Endothelial cell of umbilical vein (primary cell): ENCODE measurements at regions of chr17 and their contacts with region 1.

Region 1: GRCh38 chr17:50865984-50866774 is at the start of gene TOB1:
- DNase-seq: peak; percentile 98
- H3K4me3 ChIP-seq: peak within 1 kb of the TSS; percentile 48 to 82 (median 63)
- H3K27ac ChIP-seq: peak within 1 kb of the TSS; percentile 38
- H3K4me1 ChIP-seq: peaks cover 11% of the 10 kb centered on the region
- H3K27me3 ChIP-seq: no peaks in the 10 kb centered on the region
- CTCF ChIP-seq: no peak
- POLR2A ChIP-seq: peak; percentile 99
- total RNA-seq, gene TOB1: 12.9 and 13.0 TPM in 2 replicates

Region 2: DNA sequence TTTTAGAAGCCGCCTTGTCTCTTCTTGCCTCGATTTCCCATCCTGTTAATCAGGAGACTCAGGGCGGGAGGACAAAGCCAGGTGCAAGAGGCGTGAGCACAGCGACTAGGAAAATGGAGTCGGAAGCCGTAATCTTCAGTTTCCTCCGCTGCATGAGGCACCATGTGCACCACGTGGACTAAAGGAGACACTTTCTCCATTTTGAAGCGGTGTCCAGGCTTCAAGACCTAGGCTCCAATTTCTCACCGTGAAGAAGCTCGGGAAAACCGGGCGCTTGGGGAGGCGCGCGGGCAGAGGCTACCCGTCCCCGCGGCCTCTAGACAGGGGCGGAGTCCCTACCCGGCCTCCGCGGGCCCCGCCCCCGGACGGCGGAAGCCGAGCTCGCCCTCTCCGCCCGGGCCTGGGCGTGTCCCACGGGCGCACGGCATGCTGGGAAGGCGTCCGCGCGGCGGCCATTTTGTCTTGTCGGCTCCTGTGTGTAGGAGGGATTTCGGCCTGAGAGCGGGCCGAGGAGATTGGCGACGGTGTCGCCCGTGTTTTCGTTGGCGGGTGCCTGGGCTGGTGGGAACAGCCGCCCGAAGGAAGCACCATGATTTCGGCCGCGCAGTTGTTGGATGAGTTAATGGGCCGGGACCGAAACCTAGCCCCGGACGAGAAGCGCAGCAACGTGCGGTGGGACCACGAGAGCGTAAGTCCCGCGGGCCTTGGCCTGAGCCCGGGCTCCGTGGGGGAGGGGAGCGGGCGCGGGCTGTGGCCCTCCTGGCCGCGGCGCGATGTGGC is 146.8 kb before region 1 on chr17 and contains the start of gene LUC7L3:
- CTCF ChIA-PET with region 1: no interaction called
- POLR2A ChIA-PET with region 1: interaction called, 3 read pairs
- dilution Hi-C with region 1: no loop called
- intact Hi-C with region 1: loop called (anchors 2 kb)
- DNase-seq: peak; percentile 96
- H3K4me3 ChIP-seq: peak within 1 kb of the TSS; percentile 70 to 98 (median 90)
- H3K27ac ChIP-seq: peak within 1 kb of the TSS; percentile 94
- H3K4me1 ChIP-seq: peaks cover 22% of the 10 kb centered on the region
- H3K27me3 ChIP-seq: no peaks in the 10 kb centered on the region
- CTCF ChIP-seq: no peak
- POLR2A ChIP-seq: peak; percentile 87
- total RNA-seq, gene LUC7L3: 111 and 113 TPM in 2 replicates

Region 3: DNA sequence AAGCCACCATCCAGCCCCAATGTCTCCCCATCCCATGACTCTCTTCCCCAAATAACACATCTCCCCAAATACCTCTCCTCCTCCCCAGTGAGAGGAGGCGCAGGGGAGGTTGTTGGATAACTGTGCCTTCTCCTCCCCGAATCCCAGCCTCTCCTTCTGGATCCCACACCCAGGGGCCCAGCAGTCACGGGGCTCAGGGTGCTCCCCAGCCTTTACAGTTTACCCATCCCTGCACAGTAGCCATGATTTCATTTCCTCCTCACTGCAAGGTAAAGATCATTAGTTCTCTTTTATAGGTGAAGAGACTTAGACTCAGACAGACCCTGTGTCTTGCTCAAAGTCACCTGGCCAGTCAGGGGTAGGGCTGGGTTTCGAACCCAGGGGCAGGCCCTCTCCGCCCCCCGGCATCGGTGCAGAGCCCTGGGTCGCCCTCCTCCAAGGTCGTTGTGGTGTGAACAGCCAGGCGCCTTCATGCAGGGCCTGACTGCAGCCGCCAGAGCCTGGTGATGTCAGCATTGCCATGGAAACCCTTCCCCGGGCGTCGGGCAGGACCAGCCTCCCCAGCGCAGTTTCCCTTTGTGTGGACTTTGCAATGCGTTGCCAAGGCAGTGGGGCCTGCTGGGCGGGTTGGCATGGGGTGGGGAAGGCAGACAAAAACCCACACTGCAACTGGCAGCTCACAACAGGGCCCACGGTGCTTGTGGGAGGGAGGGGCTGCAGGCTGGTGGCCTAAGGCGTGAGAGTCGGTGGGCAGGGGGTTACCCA is 53.3 kb after region 1 on chr17:
- CTCF ChIA-PET with region 1: no interaction called
- POLR2A ChIA-PET with region 1: interaction called, 4 read pairs
- dilution Hi-C with region 1: no loop called
- intact Hi-C with region 1: loop called (anchors 2 kb)
- DNase-seq: peak; percentile 81
- H3K4me3 ChIP-seq: no peak overlapping the region
- H3K27ac ChIP-seq: no peak overlapping the region
- H3K4me1 ChIP-seq: peaks cover 4% of the 10 kb centered on the region
- H3K27me3 ChIP-seq: no peaks in the 10 kb centered on the region
- CTCF ChIP-seq: no peak
- POLR2A ChIP-seq: no peak

Region 4: GRCh38 chr17:50949989-50950881 is 84.1 kb after region 1 on chr17:
- CTCF ChIA-PET with region 1: interaction called, 149 read pairs
- POLR2A ChIA-PET with region 1: interaction called, 18 read pairs
- dilution Hi-C with region 1: no loop called
- intact Hi-C with region 1: loop called (anchors 1 kb)
- DNase-seq: peak; percentile 58
- H3K4me3 ChIP-seq: no peak overlapping the region
- H3K27ac ChIP-seq: no peak overlapping the region
- H3K4me1 ChIP-seq: peaks cover 7% of the 10 kb centered on the region
- H3K27me3 ChIP-seq: no peaks in the 10 kb centered on the region
- CTCF ChIP-seq: peak; percentile 61 to 78
- POLR2A ChIP-seq: no peak

Region 5: GRCh38 chr17:50976951-50977472 is 110.8 kb after region 1 on chr17:
- CTCF ChIA-PET with region 1: interaction called, 11 read pairs
- POLR2A ChIA-PET with region 1: interaction called, 4 read pairs
- dilution Hi-C with region 1: no loop called
- intact Hi-C with region 1: no loop called
- DNase-seq: peak; percentile 46
- H3K4me3 ChIP-seq: no peak overlapping the region
- H3K27ac ChIP-seq: peak overlapping the region; percentile 48
- H3K4me1 ChIP-seq: peaks cover 12% of the 10 kb centered on the region
- H3K27me3 ChIP-seq: no peaks in the 10 kb centered on the region
- CTCF ChIP-seq: no peak
- POLR2A ChIP-seq: no peak

Region 6: GRCh38 chr17:50986989-50987660 is 120.9 kb after region 1 on chr17:
- CTCF ChIA-PET with region 1: no interaction called
- POLR2A ChIA-PET with region 1: no interaction called
- dilution Hi-C with region 1: no loop called
- intact Hi-C with region 1: no loop called
- DNase-seq: no peak
- H3K4me3 ChIP-seq: no peak overlapping the region
- H3K27ac ChIP-seq: no peak overlapping the region
- H3K4me1 ChIP-seq: no peaks in the 10 kb centered on the region
- H3K27me3 ChIP-seq: no peaks in the 10 kb centered on the region
- CTCF ChIP-seq: no peak
- POLR2A ChIP-seq: no peak

Region 7: DNA sequence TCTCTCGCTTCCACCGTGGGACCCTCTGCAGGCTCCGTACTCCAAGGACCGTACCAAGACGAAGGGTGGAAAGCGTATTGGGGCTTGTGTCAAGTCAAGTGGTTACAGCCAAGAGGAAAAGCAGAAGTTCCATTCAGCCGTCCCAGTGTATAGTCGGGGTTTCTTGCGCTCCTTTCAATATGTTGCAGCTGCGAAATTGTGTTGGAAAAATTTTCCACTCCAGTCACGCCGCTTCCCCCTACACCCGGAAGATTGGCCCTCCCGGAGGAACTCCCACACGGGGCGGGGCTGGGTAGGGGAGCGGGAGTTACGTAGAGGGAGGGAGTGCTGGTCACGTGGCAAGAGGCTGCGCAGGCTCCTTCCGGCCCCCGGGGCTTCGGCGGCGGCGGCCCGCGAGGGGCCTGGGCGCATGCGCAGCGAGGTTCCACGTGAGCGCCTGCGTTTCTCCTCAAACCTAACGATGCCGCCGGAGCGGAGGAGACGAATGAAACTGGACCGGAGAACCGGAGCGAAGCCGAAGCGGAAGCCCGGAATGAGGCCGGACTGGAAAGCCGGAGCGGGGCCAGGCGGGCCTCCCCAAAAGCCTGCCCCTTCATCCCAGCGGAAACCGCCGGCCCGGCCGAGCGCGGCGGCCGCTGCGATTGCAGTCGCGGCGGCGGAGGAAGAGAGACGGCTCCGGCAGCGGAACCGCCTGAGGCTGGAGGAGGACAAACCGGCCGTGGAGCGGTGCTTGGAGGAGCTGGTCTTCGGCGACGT is 394.1 kb after region 1 on chr17 and contains the start of gene UTP18:
- CTCF ChIA-PET with region 1: no interaction called
- POLR2A ChIA-PET with region 1: no interaction called
- dilution Hi-C with region 1: no loop called
- intact Hi-C with region 1: loop called (anchors 5 kb)
- DNase-seq: peak; percentile 97
- H3K4me3 ChIP-seq: peak within 1 kb of the TSS; percentile 70 to 99 (median 88)
- H3K27ac ChIP-seq: peak within 1 kb of the TSS; percentile 99
- H3K4me1 ChIP-seq: peaks cover 19% of the 10 kb centered on the region
- H3K27me3 ChIP-seq: no peaks in the 10 kb centered on the region
- CTCF ChIP-seq: no peak
- POLR2A ChIP-seq: no peak
- total RNA-seq, gene UTP18: 29.3 and 32.2 TPM in 2 replicates